Activated B cell treated with CpG ODN at 0.5 μM for 24 hours (primary cell): ENCODE measurements at regions of chr5 and their contacts with region 1.

Region 1: DNA sequence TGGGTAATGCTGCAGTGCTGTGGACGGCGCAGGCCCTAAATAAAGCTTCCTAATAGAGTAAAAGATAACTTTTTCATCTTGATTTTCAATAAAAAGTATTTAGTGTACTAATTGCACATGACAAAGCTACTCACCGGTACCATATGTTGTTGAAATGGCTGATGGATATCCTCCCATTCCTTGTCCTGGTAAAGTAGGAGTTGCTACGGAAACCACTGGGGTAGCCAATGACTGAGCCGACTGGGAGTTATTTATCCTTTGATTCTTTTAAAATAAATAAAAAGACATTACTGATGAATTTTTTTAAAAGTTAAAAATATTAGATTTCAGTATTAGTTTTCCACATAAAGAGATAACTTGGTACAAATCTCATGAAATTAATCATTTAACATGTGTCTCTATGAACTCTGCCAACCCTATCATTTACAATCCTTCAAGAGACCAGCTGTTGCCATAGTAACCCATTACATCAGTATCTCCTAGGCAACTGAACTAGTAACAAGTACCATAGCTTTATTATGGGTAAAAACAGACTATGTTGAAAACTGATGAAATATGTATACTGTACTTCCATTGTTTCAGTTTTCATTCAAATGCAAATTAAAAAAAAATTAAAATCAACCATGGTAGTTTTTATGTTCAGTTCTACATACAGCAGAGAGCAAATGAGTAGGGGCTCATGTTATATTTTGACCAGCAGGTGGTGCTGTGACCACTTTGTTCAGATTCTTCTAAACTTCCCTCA is 153.7 kb downstream of the MEF2C start:
- DNase-seq: no peak
- ATAC-seq: peak; percentile 21
- H3K4me3 Mint-ChIP-seq: no peak overlapping the region
- H3K27ac Mint-ChIP-seq: peak overlapping the region; percentile 78
- H3K4me1 Mint-ChIP-seq: peaks cover 51% of the 10 kb centered on the region
- H3K27me3 Mint-ChIP-seq: no peaks in the 10 kb centered on the region
- CTCF ChIP-seq: peak; percentile 58

Region 2: DNA sequence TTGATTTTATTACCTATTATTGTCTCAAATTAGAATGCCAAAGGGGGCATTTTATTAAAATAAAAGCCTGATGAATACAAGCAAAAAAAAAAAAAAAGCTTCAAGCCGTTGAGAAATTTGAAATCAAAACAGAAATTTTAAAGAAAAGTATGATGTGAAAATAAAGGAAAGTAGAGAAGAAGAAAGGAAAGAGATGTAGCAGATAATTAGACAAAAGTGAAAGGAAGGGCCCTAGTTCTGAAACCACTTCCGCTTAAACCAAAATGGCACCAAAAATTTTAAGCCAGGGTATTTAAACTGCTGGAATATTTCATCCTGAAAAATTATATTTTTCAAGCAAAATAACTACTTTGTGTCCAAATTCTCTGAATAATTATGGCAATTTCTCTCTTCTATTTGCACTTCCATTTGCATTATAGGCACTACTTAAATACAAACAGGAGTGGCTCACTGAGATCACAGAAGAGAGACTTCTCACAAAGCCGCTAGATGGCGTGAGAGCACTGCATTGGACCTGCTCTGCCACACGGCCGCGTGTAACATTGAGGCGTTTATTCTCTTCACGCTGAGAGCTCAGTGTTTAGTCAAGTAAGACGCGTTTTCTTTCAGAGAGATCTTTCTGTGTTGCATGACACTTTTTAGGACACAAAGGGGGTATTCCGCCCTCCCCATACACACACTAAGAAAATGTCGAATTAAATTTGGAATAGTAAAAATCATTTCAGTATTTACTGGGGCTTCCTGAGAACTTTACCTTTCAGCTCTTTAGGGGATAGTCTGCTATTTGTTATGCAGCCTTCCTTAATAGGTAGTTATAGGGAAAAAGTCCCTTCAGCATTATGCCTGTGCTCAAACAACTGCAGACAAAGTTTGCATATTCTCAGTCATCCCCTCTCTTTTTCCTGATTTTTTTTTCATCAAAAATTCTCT is 948.2 kb before region 1 on chr5:
- CTCF ChIA-PET with region 1: interaction called, 33 read pairs
- POLR2A ChIA-PET with region 1: no interaction called
- intact Hi-C with region 1: no loop called
- DNase-seq: peak; percentile 49
- ATAC-seq: peak; percentile 99
- H3K4me3 Mint-ChIP-seq: no peak overlapping the region
- H3K27ac Mint-ChIP-seq: no peak overlapping the region
- H3K4me1 Mint-ChIP-seq: peaks cover 2% of the 10 kb centered on the region
- H3K27me3 Mint-ChIP-seq: peaks cover 15% of the 10 kb centered on the region
- CTCF ChIP-seq: peak; percentile 86

Region 3: DNA sequence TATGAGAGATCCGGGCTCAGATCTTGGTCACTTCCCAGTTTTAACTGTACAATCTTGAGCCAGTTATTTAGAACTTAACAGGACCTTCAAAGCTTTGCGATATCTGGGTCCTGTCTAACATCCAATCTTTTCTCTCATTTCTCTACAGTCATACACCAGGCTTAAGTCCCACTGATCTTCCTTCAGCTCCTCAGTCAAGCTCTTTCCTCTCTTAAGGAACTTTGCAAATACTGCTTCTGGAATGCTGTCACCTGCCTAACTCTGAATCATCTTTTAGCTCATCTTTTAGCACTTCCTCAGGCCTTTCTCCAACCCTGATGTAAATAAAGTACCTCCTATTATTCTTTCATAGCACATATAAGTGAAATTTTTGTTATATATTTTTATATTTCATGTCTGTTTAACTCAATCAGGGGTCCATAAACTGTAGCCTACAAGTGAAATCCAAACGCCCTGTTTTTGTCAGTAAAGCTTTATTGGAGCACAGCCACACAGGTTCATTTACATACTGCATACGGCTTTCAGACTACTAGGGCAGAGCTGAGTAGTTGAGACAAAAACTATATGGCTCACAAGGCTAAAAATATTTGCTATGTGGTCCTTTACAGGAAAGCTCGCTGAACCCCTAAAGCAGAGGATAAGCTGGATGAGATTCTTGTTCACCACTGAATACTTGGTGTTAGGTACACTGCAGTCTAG is 90.2 kb after region 1 on chr5:
- CTCF ChIA-PET with region 1: interaction called, 24 read pairs
- POLR2A ChIA-PET with region 1: interaction called, 229 read pairs
- intact Hi-C with region 1: no loop called
- DNase-seq: no peak
- ATAC-seq: peak; percentile 67
- H3K4me3 Mint-ChIP-seq: peak overlapping the region; percentile 80
- H3K27ac Mint-ChIP-seq: peak overlapping the region; percentile 91
- H3K4me1 Mint-ChIP-seq: peaks cover 87% of the 10 kb centered on the region
- H3K27me3 Mint-ChIP-seq: no peaks in the 10 kb centered on the region
- CTCF ChIP-seq: no peak

Region 4: DNA sequence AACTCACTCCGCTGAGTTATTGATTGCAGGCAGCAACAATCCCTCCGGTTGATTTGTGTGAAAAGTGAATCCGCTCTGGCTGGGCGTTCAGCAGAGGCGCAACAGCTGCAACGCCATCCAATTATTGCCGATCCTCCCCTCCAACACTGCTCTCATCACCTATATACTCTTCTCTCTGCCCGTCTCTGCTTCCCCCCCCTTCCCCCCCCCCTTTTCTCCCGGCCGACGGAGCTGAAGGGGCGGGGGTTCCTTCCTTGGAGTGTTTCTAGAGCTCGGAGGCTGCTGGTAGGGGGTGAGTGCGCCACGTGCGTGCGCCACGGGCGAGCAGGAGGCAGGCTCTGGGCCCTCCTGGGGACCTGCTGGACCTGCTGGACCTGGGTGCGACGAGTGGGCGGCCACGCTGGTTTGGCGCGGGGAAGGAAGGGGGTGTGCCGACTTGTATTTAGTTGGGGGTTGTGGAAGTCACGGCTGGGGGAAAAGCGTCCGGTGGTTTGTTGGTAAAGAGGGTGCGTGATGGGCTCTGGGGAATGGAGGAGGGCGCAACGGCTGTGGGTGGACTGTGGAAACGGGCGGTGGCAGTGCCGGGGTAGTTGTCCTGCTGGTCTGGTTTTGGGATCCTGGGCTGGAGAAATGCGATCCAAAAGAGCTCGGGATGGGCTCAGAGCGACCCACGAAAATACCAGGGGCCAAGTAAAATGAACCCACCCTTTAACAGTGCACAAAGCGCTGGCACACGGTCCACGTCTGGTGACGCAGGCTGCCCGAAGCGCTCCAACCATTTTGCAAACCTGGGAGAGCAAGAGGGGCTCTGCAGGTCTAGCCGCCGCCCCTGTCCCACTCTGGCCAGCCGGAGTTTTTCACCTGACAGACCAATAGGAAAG is 160.2 kb after region 1 on chr5:
- CTCF ChIA-PET with region 1: interaction called, 6 read pairs
- POLR2A ChIA-PET with region 1: interaction called, 242 read pairs
- intact Hi-C with region 1: no loop called
- DNase-seq: peak; percentile 61
- ATAC-seq: peak; percentile 58
- H3K4me3 Mint-ChIP-seq: peak overlapping the region; percentile 98
- H3K27ac Mint-ChIP-seq: peak overlapping the region; percentile 99
- H3K4me1 Mint-ChIP-seq: peaks cover 66% of the 10 kb centered on the region
- H3K27me3 Mint-ChIP-seq: no peaks in the 10 kb centered on the region
- CTCF ChIP-seq: no peak

Region 5: GRCh38 chr5:89105836-89106235 is 376.6 kb after region 1 on chr5:
- CTCF ChIA-PET with region 1: no interaction called
- POLR2A ChIA-PET with region 1: no interaction called
- intact Hi-C with region 1: no loop called
- DNase-seq: no peak
- ATAC-seq: no peak
- H3K4me3 Mint-ChIP-seq: no peak overlapping the region
- H3K27ac Mint-ChIP-seq: no peak overlapping the region
- H3K4me1 Mint-ChIP-seq: no peaks in the 10 kb centered on the region
- H3K27me3 Mint-ChIP-seq: no peaks in the 10 kb centered on the region
- CTCF ChIP-seq: no peak

Region 6: GRCh38 chr5:89343666-89344065 is 614.4 kb after region 1 on chr5:
- CTCF ChIA-PET with region 1: interaction called, 5 read pairs
- POLR2A ChIA-PET with region 1: interaction called, 3 read pairs
- intact Hi-C with region 1: loop called (anchors 2 kb)
- DNase-seq: peak; percentile 29
- ATAC-seq: peak; percentile 79
- H3K4me3 Mint-ChIP-seq: peak overlapping the region; percentile 42
- H3K27ac Mint-ChIP-seq: peak overlapping the region; percentile 80
- H3K4me1 Mint-ChIP-seq: peaks cover 49% of the 10 kb centered on the region
- H3K27me3 Mint-ChIP-seq: no peaks in the 10 kb centered on the region
- CTCF ChIP-seq: no peak

Region 7: GRCh38 chr5:90000351-90000750 is 1271.1 kb after region 1 on chr5:
- CTCF ChIA-PET with region 1: interaction called, 3 read pairs
- POLR2A ChIA-PET with region 1: no interaction called
- intact Hi-C with region 1: loop called (anchors 5 kb)
- DNase-seq: no peak
- ATAC-seq: no peak
- H3K4me3 Mint-ChIP-seq: no peak overlapping the region
- H3K27ac Mint-ChIP-seq: no peak overlapping the region
- H3K4me1 Mint-ChIP-seq: peaks cover 5% of the 10 kb centered on the region
- H3K27me3 Mint-ChIP-seq: no peaks in the 10 kb centered on the region
- CTCF ChIP-seq: no peak

Region 8: GRCh38 chr5:90386099-90386710 is 1656.9 kb after region 1 on chr5:
- CTCF ChIA-PET with region 1: no interaction called
- POLR2A ChIA-PET with region 1: no interaction called
- intact Hi-C with region 1: loop called (anchors 2 kb)
- DNase-seq: no peak
- ATAC-seq: no peak
- H3K4me3 Mint-ChIP-seq: no peak overlapping the region
- H3K27ac Mint-ChIP-seq: no peak overlapping the region
- H3K4me1 Mint-ChIP-seq: no peaks in the 10 kb centered on the region
- H3K27me3 Mint-ChIP-seq: peaks cover 5% of the 10 kb centered on the region
- CTCF ChIP-seq: no peak